ENCODE measurements at regions of chr14 and their contacts with region 1.

Region 1: GRCh38 chr14:63614679-63615363 is 26.9 kb downstream of the WDR89 start:
- DNase-seq: no peak
- ATAC-seq: no peak
- H3K4me3 ChIP-seq: no peak overlapping the region
- H3K27ac ChIP-seq: no peak overlapping the region
- H3K4me1 ChIP-seq: no peaks in the 10 kb centered on the region
- H3K27me3 ChIP-seq: no peaks in the 10 kb centered on the region
- CTCF ChIP-seq: no peak

Region 2: GRCh38 chr14:62847168-62847567 is 767.7 kb before region 1 on chr14:
- CTCF ChIA-PET with region 1: no interaction called
- POLR2A ChIA-PET with region 1: no interaction called
- in situ Hi-C with region 1: no loop called
- intact Hi-C with region 1: no loop called
- DNase-seq: no peak
- ATAC-seq: no peak
- H3K4me3 ChIP-seq: no peak overlapping the region
- H3K27ac ChIP-seq: no peak overlapping the region
- H3K4me1 ChIP-seq: no peaks in the 10 kb centered on the region
- H3K27me3 ChIP-seq: no peaks in the 10 kb centered on the region
- CTCF ChIP-seq: no peak

Region 3: DNA sequence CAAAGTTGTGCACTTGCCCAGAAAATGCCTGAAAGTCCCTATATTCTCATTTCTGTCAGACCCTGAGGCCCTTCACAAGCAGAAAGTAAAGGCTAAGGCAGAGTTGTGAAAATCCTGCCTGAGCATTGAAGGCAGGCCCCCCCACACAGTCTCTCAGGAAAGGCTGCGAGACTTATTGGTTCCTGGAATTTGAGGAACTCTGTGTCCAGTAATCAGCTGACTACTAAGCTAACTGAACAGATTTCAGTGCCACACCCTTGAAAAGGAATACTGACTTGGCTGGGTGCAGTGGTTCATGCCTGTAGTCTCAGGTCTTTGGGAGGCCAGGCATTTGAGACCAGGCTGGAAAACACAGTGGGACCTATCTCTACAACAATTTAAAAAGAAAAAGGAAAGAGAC is 50.5 kb before region 1 on chr14:
- CTCF ChIA-PET with region 1: no interaction called
- POLR2A ChIA-PET with region 1: interaction called, 13 read pairs
- in situ Hi-C with region 1: no loop called
- intact Hi-C with region 1: no loop called
- DNase-seq: no peak
- ATAC-seq: no peak
- H3K4me3 ChIP-seq: no peak overlapping the region
- H3K27ac ChIP-seq: no peak overlapping the region
- H3K4me1 ChIP-seq: no peaks in the 10 kb centered on the region
- H3K27me3 ChIP-seq: no peaks in the 10 kb centered on the region
- CTCF ChIP-seq: no peak

Measured in Panc1 (cell line).